GM13976 (cell line): ENCODE measurements at regions of chr4 and their contacts with region 1.

Region 1: DNA sequence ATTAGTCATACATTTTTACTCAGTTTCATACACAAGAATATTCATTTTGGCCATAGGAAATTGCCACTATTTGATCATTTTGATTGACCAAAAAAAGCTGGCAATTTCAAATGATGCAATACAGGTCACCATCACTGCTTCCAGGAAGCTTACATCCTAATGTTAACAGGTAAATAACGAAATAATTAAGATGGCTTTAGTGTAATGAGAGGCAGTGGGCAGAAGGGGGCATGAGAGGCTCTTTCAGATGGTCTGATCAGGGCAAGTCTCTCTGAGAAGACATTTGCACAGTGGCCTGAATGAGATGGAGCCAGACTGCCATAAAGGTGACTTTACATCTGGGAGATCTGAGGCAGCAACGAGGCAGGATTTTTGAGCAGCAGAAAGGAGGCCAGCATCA is 170.7 kb downstream of the SLIT2 start:
- DNase-seq: no peak
- CTCF ChIP-seq: peak; percentile 45

Region 2: DNA sequence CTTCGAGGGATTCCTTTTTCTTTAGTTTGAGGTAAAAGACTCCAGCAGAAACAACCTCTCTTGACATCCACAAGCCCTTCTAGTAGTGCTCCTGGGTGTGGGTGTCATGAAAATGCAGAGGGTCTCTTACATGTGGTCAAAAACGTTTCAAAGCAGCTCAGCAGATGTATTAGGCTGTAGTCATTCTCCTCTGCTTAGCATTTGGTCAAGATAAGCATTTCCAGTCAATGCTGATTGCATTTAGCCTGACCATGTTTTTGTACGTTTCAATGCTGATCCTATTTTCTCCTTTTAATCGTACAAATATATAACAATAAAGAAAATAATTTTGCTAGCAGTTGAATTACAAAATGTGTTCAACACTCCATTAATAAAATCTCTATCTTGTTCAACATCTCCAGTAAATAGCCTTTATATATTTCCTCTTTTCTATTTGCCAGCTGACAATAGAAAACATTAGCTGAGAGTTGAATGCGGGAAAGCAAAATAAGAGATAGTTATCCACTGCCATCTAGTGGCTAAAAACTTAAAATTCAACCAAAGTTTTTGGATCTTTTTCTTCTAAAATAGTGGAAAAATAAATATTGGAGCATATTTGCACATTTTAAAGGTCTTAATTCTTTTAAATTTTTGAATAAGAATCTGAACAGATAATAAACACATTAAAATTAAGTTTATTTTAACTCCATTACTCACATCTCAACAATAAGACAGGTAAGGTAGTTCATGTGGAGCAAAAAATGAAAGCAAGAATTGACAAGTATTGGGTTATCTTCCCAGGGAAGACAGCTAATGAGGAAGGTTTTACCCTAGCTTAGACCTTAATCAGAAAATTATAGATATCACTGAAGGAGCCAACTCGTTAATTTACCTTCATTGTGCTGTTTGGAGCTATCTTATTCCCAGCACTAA is 262.7 kb after region 1 on chr4:
- in situ Hi-C with region 1: loop called (anchors 10 kb)
- DNase-seq: peak; percentile 27
- CTCF ChIP-seq: peak; percentile 26